Common myeloid progenitor, CD34-positive (primary cell): ENCODE measurements at regions of chr2 and their contacts with region 1.

Region 1: GRCh38 chr2:233061591-233062450 is 1.7 kb downstream of the INPP5D start:
- DNase-seq: peak in 2 of 3 donors; percentile 45 to 58
- H3K4me3 ChIP-seq: peak overlapping the region; percentile 65 to 99 (median 95)
- H3K27ac ChIP-seq: peak overlapping the region; percentile 80 to 90
- H3K4me1 ChIP-seq: peaks cover 16 to 76% (median 57%) of the 10 kb centered on the region in 4 experiments
- H3K27me3 ChIP-seq: no peaks in the 10 kb centered on the region

Region 2: DNA sequence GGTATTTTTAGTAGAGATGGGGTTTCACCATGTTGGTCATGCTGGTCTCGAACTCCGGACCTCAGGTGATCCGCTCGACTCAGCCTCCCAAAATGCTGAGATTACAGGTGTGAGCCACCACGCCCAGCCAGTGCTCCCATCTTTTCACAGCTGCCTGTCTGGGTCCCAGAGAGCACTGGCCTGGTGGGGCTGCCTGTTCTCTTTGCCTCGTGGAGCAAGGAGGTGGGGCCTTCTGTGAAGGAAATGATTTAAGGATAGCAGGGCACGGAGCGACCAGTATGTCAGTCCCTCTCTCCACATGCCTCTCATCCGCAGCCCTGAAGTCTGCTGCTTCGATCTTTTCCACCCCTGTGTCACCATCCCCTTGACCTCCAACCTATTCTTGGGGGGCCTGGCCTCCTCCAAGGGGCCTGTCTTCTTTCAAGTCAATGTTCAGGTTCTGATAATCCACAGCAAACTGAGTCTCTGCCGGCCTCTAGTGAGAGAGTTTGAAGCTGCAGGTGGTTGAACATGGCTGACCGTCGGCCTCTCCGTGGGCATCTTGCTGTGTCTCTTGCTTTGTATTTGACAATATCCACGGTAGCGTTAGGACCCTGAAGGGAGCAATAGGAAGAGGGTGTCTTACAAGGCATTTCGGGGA is 392.9 kb before region 1 on chr2:
- CTCF ChIA-PET with region 1: no interaction called
- POLR2A ChIA-PET with region 1: no interaction called
- DNase-seq: peak; percentile 23 to 44 (median 27)
- H3K4me3 ChIP-seq: no peak overlapping the region
- H3K27ac ChIP-seq: no peak overlapping the region
- H3K4me1 ChIP-seq: no peaks in the 10 kb centered on the region
- H3K27me3 ChIP-seq: no peaks in the 10 kb centered on the region

Region 3: DNA sequence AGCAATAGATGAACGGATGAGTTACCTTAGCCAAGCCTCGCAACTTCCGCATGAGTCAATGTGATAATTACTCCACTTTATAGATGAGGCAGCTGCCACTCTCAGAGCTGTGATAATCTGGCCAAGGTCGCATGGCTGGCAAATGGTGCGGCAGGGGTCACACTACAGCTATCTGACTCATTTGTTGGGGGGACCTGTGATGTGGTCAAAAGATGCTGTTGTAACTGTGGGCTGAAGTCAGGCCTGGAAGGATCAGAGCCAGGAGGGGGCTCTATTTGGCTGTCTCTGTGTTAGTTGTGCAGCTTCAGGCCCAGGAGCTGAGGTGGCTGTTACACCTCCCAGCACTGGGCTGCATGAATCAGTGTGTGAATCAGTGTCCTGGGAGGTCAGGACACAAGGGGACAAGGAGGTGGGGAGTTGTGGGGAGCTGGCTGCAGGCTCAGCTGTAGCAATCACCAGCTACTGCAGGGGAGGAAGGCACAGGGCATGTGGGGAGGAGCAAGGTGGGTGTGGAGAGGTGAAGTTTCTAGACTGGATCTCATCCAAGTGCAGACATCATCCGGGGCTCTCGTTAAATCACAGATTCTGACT is 81.9 kb before region 1 on chr2:
- CTCF ChIA-PET with region 1: no interaction called
- POLR2A ChIA-PET with region 1: no interaction called
- DNase-seq: peak in 1 of 3 donors; percentile 7
- H3K4me3 ChIP-seq: no peak overlapping the region
- H3K27ac ChIP-seq: no peak overlapping the region
- H3K4me1 ChIP-seq: peaks cover 0 to 2% (median 0%) of the 10 kb centered on the region in 4 experiments
- H3K27me3 ChIP-seq: peaks cover 0 to 3% (median 0%) of the 10 kb centered on the region in 5 experiments

Region 4: DNA sequence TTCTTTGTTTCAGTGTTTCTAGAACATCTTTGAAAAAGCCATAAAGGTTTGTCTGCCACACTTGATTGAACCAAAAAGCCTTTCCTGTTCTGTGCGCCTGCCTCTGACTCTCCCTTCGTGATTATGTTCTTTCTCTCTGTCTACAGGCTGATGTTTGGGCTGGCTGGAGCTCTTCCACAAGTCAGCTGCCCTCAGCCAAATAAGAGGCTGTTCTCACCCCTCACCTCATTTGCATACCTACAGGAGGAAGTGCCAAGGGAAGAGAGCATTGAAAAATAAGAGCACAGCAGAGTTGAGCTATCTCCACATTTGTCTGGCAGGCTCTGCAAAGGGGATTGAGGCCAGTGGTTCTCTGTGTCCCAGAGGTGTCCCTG is 14.1 kb after region 1 on chr2:
- CTCF ChIA-PET with region 1: interaction called, 42 read pairs
- POLR2A ChIA-PET with region 1: interaction called, 10 read pairs
- DNase-seq: peak in 1 of 3 donors; percentile 65
- H3K4me3 ChIP-seq: peak overlapping the region in 4 of 7 experiments; percentile 27 to 50 (median 35)
- H3K27ac ChIP-seq: peak overlapping the region; percentile 13 to 65
- H3K4me1 ChIP-seq: peaks cover 48 to 79% (median 75%) of the 10 kb centered on the region in 4 experiments
- H3K27me3 ChIP-seq: no peaks in the 10 kb centered on the region

Region 5: DNA sequence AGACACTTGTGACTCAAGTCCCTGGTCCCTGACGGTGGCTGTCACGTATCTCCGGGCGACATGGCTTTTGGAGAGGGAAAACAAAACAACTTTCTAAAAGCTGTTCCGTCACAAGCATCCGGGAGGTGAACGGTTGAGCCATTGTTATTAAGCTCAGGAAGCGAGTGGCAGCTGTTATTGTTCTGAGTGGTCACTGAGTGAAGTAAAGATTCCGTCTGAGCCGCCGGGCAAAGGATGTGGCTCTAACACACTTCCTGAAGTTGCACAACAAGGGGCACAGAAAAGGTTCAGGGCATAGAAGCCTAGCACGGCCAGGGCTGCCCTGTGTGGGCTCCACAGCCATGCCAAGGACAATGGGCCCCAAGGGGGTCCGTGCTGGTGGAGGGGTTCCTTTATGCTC is 22.7 kb after region 1 on chr2:
- CTCF ChIA-PET with region 1: interaction called, 42 read pairs
- POLR2A ChIA-PET with region 1: interaction called, 9 read pairs
- DNase-seq: peak; percentile 64 to 93 (median 90)
- H3K4me3 ChIP-seq: peak overlapping the region in 5 of 7 experiments; percentile 13 to 52 (median 49)
- H3K27ac ChIP-seq: peak overlapping the region; percentile 83 to 88
- H3K4me1 ChIP-seq: peaks cover 52 to 96% (median 88%) of the 10 kb centered on the region in 4 experiments
- H3K27me3 ChIP-seq: no peaks in the 10 kb centered on the region

Region 6: DNA sequence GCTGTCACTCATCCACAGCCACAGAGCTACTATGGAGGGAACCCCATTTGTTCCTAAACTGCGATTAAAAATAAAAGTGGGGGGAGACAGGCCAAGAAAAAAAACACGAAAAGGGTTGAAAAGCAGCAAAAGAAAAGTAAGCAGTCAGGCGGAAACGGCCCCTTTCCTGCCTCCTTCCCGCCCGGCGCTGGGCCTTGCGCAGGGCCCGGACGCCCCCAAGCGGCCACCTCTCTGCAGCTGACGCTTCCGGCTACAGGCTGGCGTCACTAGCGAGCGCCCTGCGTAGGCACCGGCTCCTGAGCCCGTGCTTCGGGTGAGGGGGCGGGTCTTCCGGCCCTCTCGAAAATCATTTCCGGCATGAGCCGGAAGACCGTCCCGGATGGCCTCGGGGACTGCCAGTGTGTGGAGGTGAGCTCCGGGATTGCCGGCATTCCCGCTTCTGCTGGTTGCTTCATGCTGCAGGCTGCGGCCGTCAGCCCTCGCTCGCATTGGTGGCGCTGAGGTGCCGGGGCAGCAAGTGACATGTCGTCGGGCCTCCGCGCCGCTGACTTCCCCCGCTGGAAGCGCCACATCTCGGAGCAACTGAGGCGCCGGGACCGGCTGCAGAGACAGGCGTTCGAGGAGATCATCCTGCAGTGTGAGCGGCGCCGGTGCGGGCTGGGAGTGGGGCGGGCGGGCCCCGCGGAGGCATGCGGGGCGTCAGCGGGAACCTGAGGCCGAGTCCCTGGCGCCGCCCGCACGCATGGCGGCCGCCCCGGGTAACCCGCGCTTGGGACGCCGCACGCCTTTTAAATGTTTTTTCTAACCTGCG is 189.7 kb after region 1 on chr2 and contains the start of gene ATG16L1:
- CTCF ChIA-PET with region 1: interaction called, 11 read pairs
- POLR2A ChIA-PET with region 1: no interaction called
- DNase-seq: peak; percentile 97 to 99 (median 98)
- H3K4me3 ChIP-seq: peak within 1 kb of the TSS; percentile 89 to 98 (median 96)
- H3K27ac ChIP-seq: peak within 1 kb of the TSS; percentile 37 to 80
- H3K4me1 ChIP-seq: peaks cover 12 to 42% (median 27%) of the 10 kb centered on the region in 4 experiments
- H3K27me3 ChIP-seq: no peaks in the 10 kb centered on the region